Natural killer cell (primary cell): ENCODE measurements at regions of chr20 and their contacts with region 1.

Region 1: DNA sequence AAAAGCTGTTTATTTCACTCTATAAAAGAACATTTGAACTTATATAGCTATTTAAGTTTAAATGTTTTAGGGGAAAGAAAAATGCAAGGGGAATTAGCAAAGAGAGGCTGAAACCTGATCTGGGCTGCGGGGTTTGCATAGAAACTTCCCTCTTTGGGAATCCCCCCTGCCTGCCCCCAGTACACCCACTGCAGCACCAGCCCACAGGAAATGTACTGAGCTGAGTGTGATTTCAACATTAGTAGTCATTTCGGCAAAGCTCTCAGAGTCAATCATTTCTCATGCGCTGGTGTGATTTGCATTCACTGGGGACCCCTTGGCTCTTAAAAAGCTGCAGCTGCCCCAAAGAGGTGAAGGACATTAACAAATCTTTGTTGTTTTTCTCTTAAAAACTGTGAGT is 859.4 kb downstream of the MAFB start:
- DNase-seq: no peak
- ATAC-seq: no peak
- H3K4me3 ChIP-seq: no peak overlapping the region
- H3K4me3 Mint-ChIP-seq: no peak overlapping the region
- H3K27ac ChIP-seq: no peak overlapping the region
- H3K27ac Mint-ChIP-seq: no peak overlapping the region
- H3K4me1 ChIP-seq: no peaks in the 10 kb centered on the region
- H3K4me1 Mint-ChIP-seq: no peaks in the 10 kb centered on the region
- H3K27me3 ChIP-seq: no peaks in the 10 kb centered on the region
- H3K27me3 Mint-ChIP-seq: peaks cover 0 to 2% of the 10 kb centered on the region in 2 donors
- CTCF ChIP-seq: no peak

Region 2: GRCh38 chr20:39892983-39893685 is 63.5 kb after region 1 on chr20:
- intact Hi-C with region 1: loop called (anchors 10 kb)
- DNase-seq: no peak
- ATAC-seq: no peak
- H3K4me3 ChIP-seq: no peak overlapping the region
- H3K4me3 Mint-ChIP-seq: no peak overlapping the region
- H3K27ac ChIP-seq: no peak overlapping the region
- H3K27ac Mint-ChIP-seq: no peak overlapping the region
- H3K4me1 ChIP-seq: no peaks in the 10 kb centered on the region
- H3K4me1 Mint-ChIP-seq: no peaks in the 10 kb centered on the region
- H3K27me3 ChIP-seq: no peaks in the 10 kb centered on the region
- H3K27me3 Mint-ChIP-seq: peaks cover 0 to 7% of the 10 kb centered on the region in 2 donors
- CTCF ChIP-seq: no peak